ENCODE measurements at regions of chr22 and their contacts with region 1.

Region 1: DNA sequence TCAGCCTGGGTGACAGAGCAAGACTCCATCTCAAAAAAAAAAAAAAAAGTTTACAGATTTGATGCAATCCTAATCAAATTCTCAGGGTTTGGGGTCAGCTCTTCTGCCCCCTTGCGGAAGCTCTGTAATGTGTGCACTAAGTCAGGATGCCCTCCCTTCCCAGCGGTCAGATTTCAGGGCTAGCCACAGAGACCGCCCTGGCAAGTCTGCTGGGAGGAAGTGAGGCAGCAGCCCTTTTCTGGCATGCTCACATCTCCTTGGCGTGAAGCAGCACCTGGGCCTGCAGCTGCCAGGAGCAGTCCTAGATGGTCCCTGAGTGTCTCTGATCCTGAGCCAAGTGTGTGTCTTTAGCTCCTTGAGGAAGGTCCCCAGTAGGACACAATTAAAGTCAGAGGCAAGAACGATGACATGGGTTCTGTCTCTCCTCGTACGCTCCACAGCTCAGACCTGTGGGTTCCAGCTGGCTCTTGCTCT is 10.9 kb upstream of the APOBEC3C start:
- DNase-seq: peak; percentile 40 to 69 (median 62)
- ATAC-seq: peak; percentile 95
- H3K4me3 ChIP-seq: no peak overlapping the region
- H3K4me3 Mint-ChIP-seq: no peak overlapping the region
- H3K27ac ChIP-seq: no peak overlapping the region
- H3K27ac Mint-ChIP-seq: peak overlapping the region in 4 of 9 donors; percentile 7 to 41 (median 24)
- H3K4me1 ChIP-seq: peaks cover 9 to 11% of the 10 kb centered on the region in 2 donors
- H3K4me1 Mint-ChIP-seq: peaks cover 0 to 17% (median 9%) of the 10 kb centered on the region in 7 donors
- H3K27me3 ChIP-seq: no peaks in the 10 kb centered on the region
- H3K27me3 Mint-ChIP-seq: peaks cover 0 to 15% (median 0%) of the 10 kb centered on the region in 5 donors

Region 2: DNA sequence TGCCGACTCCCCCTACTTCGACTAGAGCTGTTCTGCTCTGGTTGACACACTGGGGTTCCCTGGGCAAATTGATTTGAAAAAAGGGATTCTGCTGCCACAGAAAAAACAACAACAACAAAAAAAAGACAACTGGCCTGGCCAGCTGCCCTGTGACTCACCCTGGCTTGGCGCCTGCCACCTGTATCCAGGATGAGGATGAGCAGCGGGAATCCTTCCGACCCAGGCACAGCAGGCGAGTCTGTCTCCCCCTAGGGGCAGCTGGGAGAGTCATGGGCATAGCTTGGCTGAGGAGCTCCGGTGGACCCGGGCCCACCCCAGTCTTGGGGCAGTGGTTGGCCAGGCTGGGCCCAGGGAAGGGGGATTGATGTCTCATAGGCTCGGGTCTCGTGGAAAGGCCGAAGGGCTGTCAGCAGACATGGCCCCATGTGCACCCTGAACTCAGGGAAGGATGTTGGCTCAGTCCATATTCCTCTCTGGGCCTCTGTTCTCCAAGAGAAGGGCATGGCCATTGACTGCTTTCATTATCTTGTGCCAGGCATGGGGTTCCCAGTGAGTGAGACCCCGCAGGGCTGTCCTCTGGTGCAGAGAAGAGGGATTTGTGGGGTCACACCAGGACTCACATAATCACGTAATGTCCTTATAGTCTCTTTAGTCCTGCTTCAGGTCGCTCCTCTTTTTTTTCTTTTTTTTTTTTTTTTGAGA is 237.0 kb before region 1 on chr22:
- CTCF ChIA-PET with region 1: interaction called, 3 read pairs
- POLR2A ChIA-PET with region 1: no interaction called
- intact Hi-C with region 1: loop called (anchors 1 to 5 kb)
- DNase-seq: peak in 6 of 9 donors; percentile 32 to 48 (median 38)
- ATAC-seq: peak; percentile 69
- H3K4me3 ChIP-seq: no peak overlapping the region
- H3K4me3 Mint-ChIP-seq: no peak overlapping the region
- H3K27ac ChIP-seq: no peak overlapping the region
- H3K27ac Mint-ChIP-seq: peak overlapping the region in 5 of 9 donors; percentile 12 to 42 (median 19)
- H3K4me1 ChIP-seq: no peaks in the 10 kb centered on the region
- H3K4me1 Mint-ChIP-seq: peaks cover 4 to 10% (median 9%) of the 10 kb centered on the region in 7 donors
- H3K27me3 ChIP-seq: no peaks in the 10 kb centered on the region
- H3K27me3 Mint-ChIP-seq: no peaks in the 10 kb centered on the region

Region 3: DNA sequence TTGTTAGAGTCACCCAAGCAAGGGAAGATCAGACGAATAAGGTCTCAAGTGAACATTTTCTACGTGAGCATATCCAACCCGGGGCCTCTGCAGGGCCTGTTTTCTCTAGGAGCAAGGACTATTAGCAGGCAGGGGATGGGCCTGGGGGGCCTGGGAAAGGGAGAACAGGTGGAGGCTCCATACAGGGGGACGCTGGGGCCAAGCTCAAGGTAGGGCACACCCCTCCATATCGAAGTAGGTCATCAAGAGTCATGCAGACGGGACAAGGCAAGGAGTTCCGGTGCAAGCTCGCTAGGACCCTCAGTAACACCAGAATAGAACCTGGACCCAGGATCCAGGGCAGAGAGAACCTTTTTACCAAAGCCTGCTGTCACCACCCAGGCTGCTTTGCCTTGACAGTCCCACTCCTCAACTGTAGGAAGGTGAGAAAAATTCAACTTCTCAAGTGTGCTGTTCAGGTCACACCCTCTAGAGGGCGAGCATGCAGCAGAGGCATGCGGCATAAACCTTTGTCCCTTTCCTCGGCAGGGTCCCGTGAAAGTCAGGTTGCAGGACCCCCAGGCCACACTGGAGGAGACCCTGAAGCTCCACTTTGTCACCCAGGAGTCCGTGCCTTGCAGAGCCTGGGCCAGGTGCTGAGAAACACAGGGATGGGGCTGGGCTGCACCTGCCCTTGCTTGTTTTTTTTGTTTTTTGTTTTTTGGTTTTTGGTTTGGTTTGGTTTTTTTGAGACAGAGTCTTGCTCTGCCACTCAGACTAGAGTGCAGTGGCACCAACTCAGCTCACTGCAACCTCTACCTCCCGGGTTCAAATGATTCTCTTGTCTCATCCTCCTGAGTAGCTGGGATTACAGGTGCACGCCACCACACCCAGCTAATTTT is 29.7 kb before region 1 on chr22:
- CTCF ChIA-PET with region 1: interaction called, 36 read pairs
- POLR2A ChIA-PET with region 1: no interaction called
- intact Hi-C with region 1: loop called (anchors 1 kb)
- DNase-seq: peak in 7 of 9 donors; percentile 20 to 54 (median 42)
- ATAC-seq: peak; percentile 86
- H3K4me3 ChIP-seq: no peak overlapping the region
- H3K4me3 Mint-ChIP-seq: no peak overlapping the region
- H3K27ac ChIP-seq: no peak overlapping the region
- H3K27ac Mint-ChIP-seq: peak overlapping the region in 1 of 9 donors; percentile 46
- H3K4me1 ChIP-seq: no peaks in the 10 kb centered on the region
- H3K4me1 Mint-ChIP-seq: peaks cover 0 to 22% (median 0%) of the 10 kb centered on the region in 7 donors
- H3K27me3 ChIP-seq: no peaks in the 10 kb centered on the region
- H3K27me3 Mint-ChIP-seq: peaks cover 0 to 21% (median 11%) of the 10 kb centered on the region in 5 donors

Region 4: GRCh38 chr22:39117585-39118191 is 114.5 kb after region 1 on chr22:
- CTCF ChIA-PET with region 1: interaction called, 16 read pairs
- POLR2A ChIA-PET with region 1: no interaction called
- intact Hi-C with region 1: loop called (anchors 1 kb)
- DNase-seq: peak in 8 of 9 donors; percentile 46 to 69 (median 62)
- ATAC-seq: peak; percentile 77
- H3K4me3 ChIP-seq: no peak overlapping the region
- H3K4me3 Mint-ChIP-seq: peak overlapping the region in 2 of 10 donors; percentile 40 to 47
- H3K27ac ChIP-seq: no peak overlapping the region
- H3K27ac Mint-ChIP-seq: peak overlapping the region in 5 of 9 donors; percentile 3 to 73 (median 59)
- H3K4me1 ChIP-seq: peaks cover 6 to 28% of the 10 kb centered on the region in 2 donors
- H3K4me1 Mint-ChIP-seq: peaks cover 7 to 42% (median 18%) of the 10 kb centered on the region in 7 donors
- H3K27me3 ChIP-seq: no peaks in the 10 kb centered on the region
- H3K27me3 Mint-ChIP-seq: no peaks in the 10 kb centered on the region